ENCODE measurements at regions of chr6 and their contacts with region 1.

Region 1: DNA sequence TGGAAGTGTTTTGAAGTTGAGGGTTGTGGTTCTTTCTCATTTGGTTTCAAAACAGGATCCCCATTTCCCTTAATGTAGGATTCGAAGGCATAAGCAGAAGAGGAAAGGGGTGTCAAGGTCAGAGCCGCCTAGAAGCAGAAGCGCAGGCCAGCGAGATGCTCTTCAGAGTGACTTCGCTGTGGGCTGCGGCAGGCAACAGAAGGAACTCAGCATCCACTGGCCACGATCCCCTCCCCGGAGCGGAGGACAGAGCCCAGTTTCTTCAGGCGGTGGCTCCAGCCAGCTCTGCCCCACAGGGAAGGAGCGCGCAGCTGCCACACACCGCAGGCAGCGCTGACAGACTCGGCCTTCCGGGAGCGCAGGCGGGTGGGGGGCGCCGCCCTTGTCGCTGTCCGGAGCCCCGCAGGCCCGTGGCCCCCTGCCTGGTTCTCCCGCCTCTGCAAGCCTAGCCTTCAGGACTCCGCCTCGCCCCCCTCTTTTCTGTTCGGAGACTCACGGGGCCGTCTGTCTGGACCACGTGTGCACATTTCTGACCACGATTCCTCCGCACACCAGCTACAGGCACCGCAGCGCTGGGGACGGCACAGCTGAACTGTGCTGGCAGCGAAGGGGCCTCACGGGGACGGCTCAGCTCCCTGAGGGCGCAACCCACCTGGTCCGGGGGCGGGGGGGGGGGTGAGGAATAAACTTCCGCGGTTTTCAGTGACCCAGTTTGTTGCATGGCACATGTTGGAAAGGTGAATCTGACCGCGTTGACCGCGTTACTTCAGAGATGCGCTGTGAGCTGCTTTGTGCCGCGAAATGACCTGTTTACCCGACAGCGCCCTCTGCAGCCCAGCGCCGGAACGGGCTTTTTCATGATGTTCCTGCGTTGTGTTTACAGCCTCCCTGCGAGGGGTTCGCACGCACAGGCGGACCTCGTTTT is 26.1 kb downstream of the TTLL2 start:
- DNase-seq: peak; percentile 91
- H3K4me3 ChIP-seq: peak overlapping the region; percentile 53
- H3K27ac ChIP-seq: no peak overlapping the region
- H3K4me1 ChIP-seq: no peaks in the 10 kb centered on the region
- H3K27me3 ChIP-seq: no peaks in the 10 kb centered on the region
- CTCF ChIP-seq: peak; percentile 84

Region 2: GRCh38 chr6:167219967-167220512 is 131.0 kb before region 1 on chr6:
- intact Hi-C with region 1: loop called (anchors 5 kb)
- DNase-seq: no peak
- H3K4me3 ChIP-seq: no peak overlapping the region
- H3K27ac ChIP-seq: no peak overlapping the region
- H3K4me1 ChIP-seq: no peaks in the 10 kb centered on the region
- H3K27me3 ChIP-seq: no peaks in the 10 kb centered on the region
- CTCF ChIP-seq: no peak

Region 3: GRCh38 chr6:167285077-167285770 is 65.8 kb before region 1 on chr6:
- intact Hi-C with region 1: loop called (anchors 10 kb)
- DNase-seq: peak; percentile 10
- H3K4me3 ChIP-seq: no peak overlapping the region
- H3K27ac ChIP-seq: no peak overlapping the region
- H3K4me1 ChIP-seq: no peaks in the 10 kb centered on the region
- H3K27me3 ChIP-seq: no peaks in the 10 kb centered on the region
- CTCF ChIP-seq: no peak

Measured in colonic mucosa (tissue), 4 donors.